ENCODE measurements at regions of chr1 and their contacts with region 1.

Region 1: DNA sequence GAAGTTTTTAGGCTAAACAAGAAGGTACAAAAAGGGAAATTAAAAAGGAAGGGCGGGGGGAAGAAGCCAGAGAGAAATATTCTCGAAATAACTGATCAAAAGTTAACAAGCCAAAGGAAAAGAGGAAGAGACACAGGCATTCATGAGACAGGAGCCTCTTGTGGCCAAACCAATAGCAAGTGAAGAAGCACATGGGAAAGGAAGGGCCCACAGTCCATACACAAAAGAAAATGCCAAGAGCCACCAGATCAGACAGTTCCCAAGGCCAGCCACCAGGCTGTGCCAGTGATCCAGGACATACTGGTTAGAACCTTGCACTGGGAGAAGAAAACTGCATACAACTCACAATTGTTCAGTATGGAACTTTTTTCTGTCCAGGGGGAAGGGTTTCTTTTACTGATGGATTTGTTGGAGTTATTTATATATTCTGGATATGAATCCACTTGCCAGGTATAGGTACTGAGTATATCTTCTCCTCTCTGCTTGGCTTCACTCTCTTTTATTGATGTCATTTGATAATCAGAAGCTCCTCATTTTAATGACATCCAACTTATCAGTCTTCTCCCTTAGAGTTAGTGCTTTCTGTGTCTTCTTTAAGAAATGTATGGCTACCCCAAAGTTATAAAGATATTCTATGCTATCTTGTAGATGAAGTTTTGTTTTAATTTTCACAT is 76.8 kb downstream of the CD46 start:
- DNase-seq: peak; percentile 78
- ATAC-seq: no peak
- H3K4me3 Mint-ChIP-seq: no peak overlapping the region
- H3K27ac Mint-ChIP-seq: peak overlapping the region; percentile 45
- H3K4me1 Mint-ChIP-seq: peaks cover 97% of the 10 kb centered on the region
- H3K27me3 Mint-ChIP-seq: no peaks in the 10 kb centered on the region

Region 2: GRCh38 chr1:206583707-206584648 is 1244.6 kb before region 1 on chr1:
- CTCF ChIA-PET with region 1: no interaction called
- POLR2A ChIA-PET with region 1: no interaction called
- intact Hi-C with region 1: loop called in 1 of 2 experiments (anchors 10 kb)
- DNase-seq: peak; percentile 93
- ATAC-seq: peak; percentile 31
- H3K4me3 Mint-ChIP-seq: peak overlapping the region; percentile 65
- H3K27ac Mint-ChIP-seq: peak overlapping the region; percentile 99
- H3K4me1 Mint-ChIP-seq: peaks cover 87% of the 10 kb centered on the region
- H3K27me3 Mint-ChIP-seq: no peaks in the 10 kb centered on the region

Region 3: DNA sequence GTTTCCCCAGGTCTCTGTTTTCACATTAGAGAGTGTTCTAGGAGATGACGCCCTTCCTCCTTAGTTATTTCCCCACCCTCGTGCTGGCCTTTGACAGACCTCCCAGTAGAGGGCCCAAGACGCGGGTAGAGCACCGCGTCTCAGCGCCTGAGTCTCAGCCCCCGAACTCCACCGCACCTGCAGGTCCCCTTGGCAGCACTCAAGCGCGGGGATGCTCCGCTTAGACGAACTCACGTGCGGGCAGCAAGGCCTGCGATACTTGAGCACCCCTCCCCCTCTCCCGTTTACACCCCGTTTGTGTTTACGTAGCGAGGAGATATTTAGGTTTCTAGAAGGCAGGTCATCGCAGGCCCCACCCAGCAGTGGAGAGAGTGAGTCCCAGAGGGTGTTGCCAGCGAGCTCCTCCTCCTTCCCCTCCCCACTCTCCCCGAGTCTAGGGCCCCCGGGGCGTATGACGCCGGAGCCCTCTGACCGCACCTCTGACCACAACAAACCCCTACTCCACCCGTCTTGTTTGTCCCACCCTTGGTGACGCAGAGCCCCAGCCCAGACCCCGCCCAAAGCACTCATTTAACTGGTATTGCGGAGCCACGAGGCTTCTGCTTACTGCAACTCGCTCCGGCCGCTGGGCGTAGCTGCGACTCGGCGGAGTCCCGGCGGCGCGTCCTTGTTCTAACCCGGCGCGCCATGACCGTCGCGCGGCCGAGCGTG is 507.4 kb before region 1 on chr1 and contains the start of gene CD55:
- CTCF ChIA-PET with region 1: no interaction called
- POLR2A ChIA-PET with region 1: no interaction called
- intact Hi-C with region 1: loop called in 1 of 2 experiments (anchors 5 kb)
- DNase-seq: peak; percentile 99
- ATAC-seq: peak; percentile 93
- H3K4me3 Mint-ChIP-seq: peak within 1 kb of the TSS; percentile 95
- H3K27ac Mint-ChIP-seq: peak within 1 kb of the TSS; percentile 100
- H3K4me1 Mint-ChIP-seq: peaks cover 31% of the 10 kb centered on the region
- H3K27me3 Mint-ChIP-seq: no peaks in the 10 kb centered on the region
- total RNA-seq, gene CD55: 56.8 to 92.7 TPM

Region 4: GRCh38 chr1:207797229-207797961 is 31.2 kb before region 1 on chr1:
- CTCF ChIA-PET with region 1: interaction called, 12 read pairs
- POLR2A ChIA-PET with region 1: interaction called, 17 read pairs
- intact Hi-C with region 1: loop called (anchors 1 kb)
- DNase-seq: peak; percentile 90
- ATAC-seq: peak; percentile 91
- H3K4me3 Mint-ChIP-seq: no peak overlapping the region
- H3K27ac Mint-ChIP-seq: no peak overlapping the region
- H3K4me1 Mint-ChIP-seq: peaks cover 36% of the 10 kb centered on the region
- H3K27me3 Mint-ChIP-seq: no peaks in the 10 kb centered on the region

Region 5: DNA sequence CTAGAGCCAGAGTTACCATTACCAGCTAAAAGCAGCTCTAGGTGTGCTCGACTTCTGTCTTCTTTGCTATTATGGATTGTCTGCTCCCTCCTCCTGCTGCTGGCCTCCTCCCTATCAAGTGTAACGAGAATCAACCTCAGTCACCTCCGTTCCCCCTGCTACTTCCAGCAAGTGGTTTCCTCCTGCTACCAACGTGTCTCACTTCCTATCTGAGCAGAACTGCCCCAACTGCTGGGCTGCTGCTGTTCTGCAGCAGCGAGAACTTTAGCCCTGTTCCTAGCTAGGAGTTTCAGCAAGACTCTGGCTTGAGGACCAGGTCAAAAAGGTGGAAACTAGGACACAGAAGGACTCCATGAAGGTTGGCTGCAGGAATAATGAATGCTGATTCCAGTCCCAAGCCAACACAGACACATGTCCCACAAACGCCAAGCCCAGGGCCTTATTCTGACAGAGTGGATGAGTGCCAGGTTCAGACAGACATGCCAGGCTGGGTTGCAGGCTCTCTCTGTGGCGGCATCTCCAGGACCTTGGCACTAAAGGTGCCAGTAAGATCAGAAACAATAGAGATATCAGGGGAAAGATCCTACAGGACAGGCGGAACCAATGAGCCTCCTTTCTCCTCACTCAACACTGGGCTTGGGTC is 35.4 kb after region 1 on chr1:
- CTCF ChIA-PET with region 1: interaction called, 297 read pairs
- POLR2A ChIA-PET with region 1: interaction called, 19 read pairs
- intact Hi-C with region 1: loop called (anchors 1 kb)
- DNase-seq: peak; percentile 70
- ATAC-seq: peak; percentile 56
- H3K4me3 Mint-ChIP-seq: peak overlapping the region; percentile 6
- H3K27ac Mint-ChIP-seq: peak overlapping the region; percentile 66
- H3K4me1 Mint-ChIP-seq: peaks cover 64% of the 10 kb centered on the region
- H3K27me3 Mint-ChIP-seq: no peaks in the 10 kb centered on the region

Region 6: GRCh38 chr1:207963427-207964194 is 135.0 kb after region 1 on chr1:
- CTCF ChIA-PET with region 1: interaction called, 26 read pairs
- POLR2A ChIA-PET with region 1: no interaction called
- intact Hi-C with region 1: loop called (anchors 1 kb)
- DNase-seq: peak; percentile 90
- ATAC-seq: peak; percentile 82
- H3K4me3 Mint-ChIP-seq: peak overlapping the region; percentile 75
- H3K27ac Mint-ChIP-seq: peak overlapping the region; percentile 71
- H3K4me1 Mint-ChIP-seq: peaks cover 2% of the 10 kb centered on the region
- H3K27me3 Mint-ChIP-seq: peaks cover 18% of the 10 kb centered on the region

Region 7: GRCh38 chr1:208520438-208521099 is 691.9 kb after region 1 on chr1:
- CTCF ChIA-PET with region 1: no interaction called
- POLR2A ChIA-PET with region 1: no interaction called
- intact Hi-C with region 1: no loop called
- DNase-seq: no peak
- ATAC-seq: no peak
- H3K4me3 Mint-ChIP-seq: no peak overlapping the region
- H3K27ac Mint-ChIP-seq: no peak overlapping the region
- H3K4me1 Mint-ChIP-seq: no peaks in the 10 kb centered on the region
- H3K27me3 Mint-ChIP-seq: peaks cover 7% of the 10 kb centered on the region

Region 8: GRCh38 chr1:209755926-209756614 is 1927.4 kb after region 1 on chr1 and contains the start of gene TRAF3IP3:
- CTCF ChIA-PET with region 1: no interaction called
- POLR2A ChIA-PET with region 1: interaction called, 3 read pairs
- intact Hi-C with region 1: loop called (anchors 10 kb)
- DNase-seq: peak; percentile 89
- ATAC-seq: peak; percentile 76
- H3K4me3 Mint-ChIP-seq: peak within 1 kb of the TSS; percentile 95
- H3K27ac Mint-ChIP-seq: peak within 1 kb of the TSS; percentile 99
- H3K4me1 Mint-ChIP-seq: peaks cover 75% of the 10 kb centered on the region
- H3K27me3 Mint-ChIP-seq: no peaks in the 10 kb centered on the region
- total RNA-seq, gene TRAF3IP3: 136 to 138 TPM

Measured in activated CD4-positive, alpha-beta T cell treated with anti-CD3 and anti-CD28 coated beads for 36 hours (primary cell).